Ascending aorta (tissue), 2 donors: ENCODE measurements at regions of chr19 and their contacts with region 1.

Region 1: DNA sequence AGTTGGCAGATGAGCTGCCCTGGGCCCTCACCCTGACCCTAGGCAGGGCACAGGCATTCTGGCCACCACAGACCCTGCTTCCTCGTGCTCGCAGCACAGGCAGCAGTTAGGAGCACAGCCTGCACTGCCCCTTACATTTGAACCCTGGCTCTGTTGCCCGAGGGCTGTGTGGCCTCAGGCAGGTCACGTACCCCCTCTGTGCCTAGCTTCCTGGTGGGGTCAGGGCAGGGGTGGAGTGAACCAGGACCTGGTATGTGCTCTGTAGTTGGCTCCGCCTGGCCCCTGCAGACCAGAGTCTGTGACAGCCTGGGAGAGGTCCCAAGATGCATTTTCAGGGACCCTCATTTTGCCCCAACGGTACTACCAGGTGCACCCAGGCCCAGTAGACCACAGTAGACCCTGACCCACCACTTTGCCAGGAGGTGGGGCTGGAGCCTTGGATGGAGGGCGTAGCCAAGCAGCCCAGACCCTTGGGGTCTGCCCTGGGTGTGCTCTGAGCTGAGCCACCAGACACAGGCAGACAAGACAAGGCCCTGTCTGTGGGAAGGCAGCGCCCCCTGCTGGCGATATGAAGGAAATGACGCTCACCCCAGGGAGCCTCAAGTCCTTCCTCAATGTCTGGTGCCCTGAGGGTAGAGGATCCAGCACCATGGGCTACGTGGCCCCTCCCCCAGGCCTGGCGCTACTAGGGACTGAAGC is 9.1 kb downstream of the LYL1 start:
- DNase-seq: peak in 1 of 2 donors; percentile 94
- H3K4me3 ChIP-seq: no peak overlapping the region
- H3K27ac ChIP-seq: peak overlapping the region; percentile 93 to 94
- H3K4me1 ChIP-seq: peaks cover 45 to 59% of the 10 kb centered on the region in 2 donors
- H3K27me3 ChIP-seq: no peaks in the 10 kb centered on the region
- CTCF ChIP-seq: peak; percentile 90 to 98 (median 94)

Region 2: DNA sequence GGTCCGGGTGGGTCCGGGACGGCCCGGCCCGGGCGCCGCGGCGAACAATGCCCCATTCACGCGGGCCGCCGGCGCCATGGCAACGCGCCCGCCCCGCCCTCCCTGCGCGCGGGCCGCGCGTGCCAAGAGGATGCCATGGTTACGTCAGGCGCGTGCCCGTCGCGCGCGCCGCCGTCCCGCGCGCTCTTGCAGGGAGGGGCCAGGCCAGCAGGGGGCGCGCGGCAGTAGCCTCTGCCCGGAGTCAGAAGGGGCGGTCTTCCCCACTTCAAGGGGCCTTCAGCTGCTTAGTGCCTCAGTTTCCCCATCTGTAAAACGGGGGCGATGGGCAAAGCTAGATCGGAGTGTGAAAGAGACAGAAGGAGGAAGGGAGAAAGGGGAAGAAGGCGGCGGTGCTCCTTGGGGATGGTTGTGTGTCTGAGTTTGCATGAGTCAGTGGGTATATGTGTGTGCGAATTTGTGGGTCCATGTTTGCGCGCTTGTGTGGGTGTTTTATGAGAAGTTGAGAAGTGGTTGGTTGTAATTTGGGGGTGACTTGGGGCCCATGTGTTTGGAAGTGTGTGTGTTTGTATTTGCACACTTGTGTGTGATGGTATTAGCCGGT is 109.9 kb before region 1 on chr19:
- intact Hi-C with region 1: loop called (anchors 1 kb)
- DNase-seq: peak in 1 of 2 donors; percentile 91
- H3K4me3 ChIP-seq: peak overlapping the region; percentile 36 to 51
- H3K27ac ChIP-seq: no peak overlapping the region
- H3K4me1 ChIP-seq: peaks cover 0 to 5% of the 10 kb centered on the region in 2 donors
- H3K27me3 ChIP-seq: no peaks in the 10 kb centered on the region
- CTCF ChIP-seq: peak; percentile 86 to 99 (median 96)

Region 3: GRCh38 chr19:12994701-12995595 is 98.6 kb before region 1 on chr19 and contains the start of gene NFIX:
- intact Hi-C with region 1: loop called (anchors 5 kb)
- DNase-seq: peak in 1 of 2 donors; percentile 86
- H3K4me3 ChIP-seq: peak within 1 kb of the TSS; percentile 92 to 97
- H3K27ac ChIP-seq: peak within 1 kb of the TSS; percentile 95 to 98
- H3K4me1 ChIP-seq: peaks cover 3 to 33% of the 10 kb centered on the region in 2 donors
- H3K27me3 ChIP-seq: no peaks in the 10 kb centered on the region
- CTCF ChIP-seq: no peak
- total RNA-seq, gene NFIX: 76.5 TPM

Region 4: GRCh38 chr19:13022859-13023636 is 70.5 kb before region 1 on chr19:
- intact Hi-C with region 1: loop called (anchors 2 kb)
- DNase-seq: peak in 1 of 2 donors; percentile 93
- H3K4me3 ChIP-seq: peak overlapping the region; percentile 57 to 67
- H3K27ac ChIP-seq: peak overlapping the region; percentile 95 to 97
- H3K4me1 ChIP-seq: peaks cover 18 to 62% of the 10 kb centered on the region in 2 donors
- H3K27me3 ChIP-seq: no peaks in the 10 kb centered on the region
- CTCF ChIP-seq: no peak